WTC11 (cell line): ENCODE measurements at regions of chr2 and their contacts with region 1.

Region 1: DNA sequence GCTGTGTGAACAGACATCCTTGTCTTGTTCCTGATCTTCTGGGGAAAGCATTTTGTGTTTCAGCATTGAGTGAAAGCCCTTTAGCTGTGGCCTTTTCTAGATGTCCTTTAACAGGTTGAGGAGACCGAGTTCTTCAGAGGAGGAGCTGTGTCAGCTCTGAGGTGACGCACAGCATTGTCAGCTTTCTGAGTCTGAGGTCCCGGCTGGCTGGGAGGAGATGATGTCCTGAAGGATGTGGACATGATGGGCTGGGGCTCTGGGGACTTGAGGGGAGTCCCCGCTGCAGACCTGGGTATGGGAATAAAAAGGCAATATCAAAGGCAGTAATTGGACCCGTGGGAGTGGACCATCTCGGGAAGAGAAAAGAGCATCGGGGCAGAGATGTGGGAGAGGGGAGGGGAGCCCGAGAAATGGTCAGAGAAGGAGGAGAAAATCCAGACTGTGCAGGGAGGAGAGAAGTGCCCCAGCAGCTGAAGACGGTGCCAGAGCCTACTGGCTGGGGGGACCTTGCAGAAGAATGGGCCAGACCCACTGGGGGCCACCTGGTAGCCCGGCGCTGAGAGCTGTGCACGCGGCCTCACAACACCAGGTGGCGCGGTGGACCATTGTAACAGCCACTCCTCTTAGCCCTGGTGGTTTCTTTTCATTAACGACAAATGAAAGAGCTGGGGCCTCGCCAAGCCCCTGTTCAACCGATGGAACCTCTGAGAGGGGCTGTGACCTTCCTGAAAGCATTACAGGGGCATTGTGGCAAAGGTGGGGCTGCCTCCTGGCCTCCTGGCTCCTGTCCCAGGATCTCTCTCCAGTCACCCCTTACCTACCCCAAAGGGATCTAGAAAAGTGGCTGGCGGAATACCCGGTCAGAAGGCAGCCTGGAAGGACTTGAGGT is 61.6 kb downstream of the ST3GAL5 start:
- DNase-seq: peak; percentile 87
- ATAC-seq: peak; percentile 97
- H3K4me3 Mint-ChIP-seq: no peak overlapping the region; the same call in 1 of the 2 replicates
- H3K27ac Mint-ChIP-seq: no peak overlapping the region
- H3K4me1 Mint-ChIP-seq: peaks cover 13% of the 10 kb centered on the region
- H3K27me3 Mint-ChIP-seq: no peaks in the 10 kb centered on the region
- CTCF ChIP-seq: peak; percentile 62

Region 2: GRCh38 chr2:85750587-85751575 is 76.4 kb before region 1 on chr2:
- CTCF ChIA-PET with region 1: interaction called, 11 read pairs
- POLR2A ChIA-PET with region 1: no interaction called
- DNase-seq: peak; percentile 83
- ATAC-seq: peak; percentile 48
- H3K4me3 Mint-ChIP-seq: no peak overlapping the region
- H3K27ac Mint-ChIP-seq: no peak overlapping the region
- H3K4me1 Mint-ChIP-seq: peaks cover 10% of the 10 kb centered on the region
- H3K27me3 Mint-ChIP-seq: peaks cover 53% of the 10 kb centered on the region
- CTCF ChIP-seq: peak; percentile 56

Region 3: DNA sequence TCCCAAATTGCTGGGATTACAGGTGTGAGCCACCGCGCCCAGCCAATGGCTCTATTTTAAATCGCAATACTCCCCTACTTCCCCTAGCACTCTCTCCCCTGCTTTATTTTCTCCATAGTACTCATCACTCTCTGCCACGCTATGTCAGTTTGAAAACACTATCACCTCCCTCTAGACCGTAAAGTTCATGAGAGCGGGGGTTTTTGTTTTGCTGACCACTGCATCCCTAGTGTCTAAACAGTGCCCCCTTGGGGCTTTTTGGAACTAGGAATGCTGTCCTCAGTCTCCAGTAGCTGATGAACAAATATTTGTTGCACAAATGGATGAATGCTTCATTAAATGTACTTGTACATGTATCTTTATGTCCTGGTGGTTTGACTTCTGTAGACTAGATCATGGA is 29.3 kb before region 1 on chr2:
- CTCF ChIA-PET with region 1: no interaction called
- POLR2A ChIA-PET with region 1: no interaction called
- DNase-seq: no peak
- ATAC-seq: peak; percentile 73
- H3K4me3 Mint-ChIP-seq: no peak overlapping the region
- H3K27ac Mint-ChIP-seq: no peak overlapping the region
- H3K4me1 Mint-ChIP-seq: no peaks in the 10 kb centered on the region
- H3K27me3 Mint-ChIP-seq: peaks cover 7% of the 10 kb centered on the region; the same call in 1 of the 2 replicates
- CTCF ChIP-seq: 0 out of 2 replicates have a peak, but pooled peaks have one; percentile 13

Region 4: GRCh38 chr2:85838181-85838580 is 10.9 kb after region 1 on chr2:
- CTCF ChIA-PET with region 1: interaction called, 25 read pairs
- POLR2A ChIA-PET with region 1: no interaction called
- DNase-seq: peak; percentile 29
- ATAC-seq: peak; percentile 92
- H3K4me3 Mint-ChIP-seq: no peak overlapping the region
- H3K27ac Mint-ChIP-seq: no peak overlapping the region
- H3K4me1 Mint-ChIP-seq: no peaks in the 10 kb centered on the region
- H3K27me3 Mint-ChIP-seq: no peaks in the 10 kb centered on the region
- CTCF ChIP-seq: no peak

Region 5: DNA sequence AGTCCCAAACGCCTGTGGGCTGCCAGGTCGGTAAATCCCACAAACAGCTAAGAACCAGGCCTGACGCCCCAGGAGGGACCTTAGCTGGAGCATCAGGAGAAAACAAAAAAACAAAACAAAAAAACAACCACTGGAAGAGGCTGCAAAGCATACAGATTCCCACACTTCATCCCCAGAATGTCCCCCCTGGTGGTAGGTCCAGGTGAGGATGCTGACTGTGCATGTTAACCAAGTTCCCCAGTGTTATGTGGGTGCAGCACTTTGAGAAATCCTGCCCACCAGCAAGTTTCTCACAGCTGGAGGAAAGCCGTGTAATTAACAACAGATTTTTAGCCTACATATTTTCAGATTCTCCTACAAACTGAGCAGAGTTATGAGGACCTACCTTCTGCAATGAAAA is 46.4 kb after region 1 on chr2:
- CTCF ChIA-PET with region 1: interaction called, 19 read pairs
- POLR2A ChIA-PET with region 1: no interaction called
- DNase-seq: peak; percentile 38
- ATAC-seq: peak; percentile 47; the same call in 1 of the 2 replicates
- H3K4me3 Mint-ChIP-seq: no peak overlapping the region
- H3K27ac Mint-ChIP-seq: no peak overlapping the region
- H3K4me1 Mint-ChIP-seq: peaks cover 26% of the 10 kb centered on the region
- H3K27me3 Mint-ChIP-seq: no peaks in the 10 kb centered on the region; the same call in 1 of the 2 replicates
- CTCF ChIP-seq: no peak

Region 6: DNA sequence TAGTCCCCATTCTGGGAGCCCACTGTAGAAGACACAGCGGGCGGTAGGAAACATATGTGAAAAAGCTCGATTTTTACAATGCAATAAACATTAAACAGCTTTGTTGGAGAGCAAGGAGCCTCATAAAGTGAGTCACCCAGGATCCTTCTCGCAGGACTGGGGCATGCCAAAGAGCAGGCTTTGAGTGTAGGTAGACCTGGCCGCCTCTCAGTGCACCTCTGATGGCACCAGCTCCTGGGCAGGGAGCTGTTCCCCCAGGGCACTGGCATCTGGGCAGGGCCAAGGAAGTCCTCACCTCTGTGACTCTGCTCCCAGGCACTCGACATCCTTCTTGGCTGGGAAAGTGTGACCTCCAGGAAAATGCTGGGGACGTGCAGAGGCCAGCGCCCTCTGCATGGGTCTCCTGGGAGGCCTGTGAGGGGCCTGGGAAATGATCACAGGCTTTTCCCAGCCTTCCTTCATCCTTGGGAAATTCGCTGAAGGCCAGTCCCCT is 184.3 kb after region 1 on chr2:
- CTCF ChIA-PET with region 1: interaction called, 18 read pairs
- POLR2A ChIA-PET with region 1: no interaction called
- DNase-seq: no peak
- ATAC-seq: no peak; the same call in 1 of the 2 replicates
- H3K4me3 Mint-ChIP-seq: no peak overlapping the region
- H3K27ac Mint-ChIP-seq: no peak overlapping the region
- H3K4me1 Mint-ChIP-seq: no peaks in the 10 kb centered on the region
- H3K27me3 Mint-ChIP-seq: peaks cover 7% of the 10 kb centered on the region
- CTCF ChIP-seq: no peak

Region 7: DNA sequence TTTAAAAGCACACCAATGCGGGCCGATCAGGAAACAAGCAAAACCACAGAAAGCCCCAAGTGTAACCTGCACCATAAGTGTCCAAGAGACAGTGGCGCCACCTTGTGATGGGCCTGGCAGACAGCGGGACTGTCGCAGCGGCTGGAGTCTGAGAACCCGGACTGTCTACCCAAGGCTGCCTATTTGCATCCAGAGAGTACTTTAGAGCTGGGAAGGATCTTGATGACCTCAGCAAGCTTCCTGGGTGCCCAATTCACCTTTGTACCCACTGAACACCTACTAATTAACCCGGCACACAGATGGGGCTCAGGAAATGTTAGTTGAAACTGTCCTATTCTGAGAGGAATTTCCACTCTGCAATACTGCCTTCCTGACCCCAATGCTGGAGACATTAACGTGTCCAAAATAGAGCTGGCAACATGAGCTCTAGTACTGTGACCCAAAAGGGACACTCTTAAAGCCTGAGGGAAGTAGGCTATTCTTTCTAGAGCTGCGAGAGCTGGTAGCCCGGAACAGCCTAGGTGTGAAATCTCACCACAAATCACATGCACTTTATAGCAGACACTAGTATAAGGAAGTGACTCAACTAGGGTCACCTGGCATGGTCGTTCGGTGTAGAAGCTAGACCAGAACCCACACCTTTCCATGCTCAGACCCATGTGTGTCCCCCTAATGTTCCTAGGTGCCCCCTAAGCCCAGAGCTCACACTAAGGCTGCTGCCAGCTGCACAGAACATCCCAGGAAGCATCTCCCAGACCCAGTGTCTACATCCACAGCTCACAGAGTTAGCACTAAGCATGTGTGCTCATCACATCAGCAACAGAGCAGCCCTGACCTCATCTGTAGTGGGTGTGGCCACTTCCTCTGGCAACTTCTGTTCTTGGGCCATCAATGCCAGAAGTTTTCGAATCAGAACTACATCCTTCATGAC is 253.0 kb after region 1 on chr2:
- CTCF ChIA-PET with region 1: interaction called, 60 read pairs
- POLR2A ChIA-PET with region 1: no interaction called
- DNase-seq: peak; percentile 84
- ATAC-seq: peak; percentile 95
- H3K4me3 Mint-ChIP-seq: no peak overlapping the region
- H3K27ac Mint-ChIP-seq: 0 out of 2 replicates have a peak overlapping the region, but pooled peaks have one; percentile 67
- H3K4me1 Mint-ChIP-seq: no peaks in the 10 kb centered on the region
- H3K27me3 Mint-ChIP-seq: no peaks in the 10 kb centered on the region
- CTCF ChIP-seq: peak; percentile 57; the same call in 1 of the 2 replicates